Naive thymus-derived CD4-positive, alpha-beta T cell (primary cell): ENCODE measurements at regions of chr3 and their contacts with region 1.

Region 1: GRCh38 chr3:153628591-153628990 is 466.6 kb downstream of the RAP2B start:
- DNase-seq: no peak
- ATAC-seq: no peak
- H3K4me3 ChIP-seq: no peak overlapping the region
- H3K4me3 Mint-ChIP-seq: peak overlapping the region in 8 of 10 donors; percentile 10 to 64 (median 56)
- H3K27ac ChIP-seq: no peak overlapping the region
- H3K27ac Mint-ChIP-seq: peak overlapping the region in 2 of 9 donors; percentile 3 to 82
- H3K4me1 ChIP-seq: peaks cover 26 to 30% of the 10 kb centered on the region in 2 donors
- H3K4me1 Mint-ChIP-seq: peaks cover 11 to 73% (median 55%) of the 10 kb centered on the region in 7 donors
- H3K27me3 ChIP-seq: no peaks in the 10 kb centered on the region
- H3K27me3 Mint-ChIP-seq: no peaks in the 10 kb centered on the region

Region 2: GRCh38 chr3:153640689-153641301 is 12.2 kb after region 1 on chr3:
- CTCF ChIA-PET with region 1: interaction called, 5 read pairs
- POLR2A ChIA-PET with region 1: interaction called, 20 read pairs
- intact Hi-C with region 1: loop called (anchors 1 kb)
- DNase-seq: no peak
- ATAC-seq: no peak
- H3K4me3 ChIP-seq: no peak overlapping the region
- H3K4me3 Mint-ChIP-seq: peak overlapping the region in 1 of 10 donors; percentile 68
- H3K27ac ChIP-seq: no peak overlapping the region
- H3K27ac Mint-ChIP-seq: no peak overlapping the region
- H3K4me1 ChIP-seq: peaks cover 16 to 24% of the 10 kb centered on the region in 2 donors
- H3K4me1 Mint-ChIP-seq: peaks cover 37 to 53% (median 45%) of the 10 kb centered on the region in 7 donors
- H3K27me3 ChIP-seq: no peaks in the 10 kb centered on the region
- H3K27me3 Mint-ChIP-seq: no peaks in the 10 kb centered on the region